CD14-positive monocyte (primary cell): ENCODE measurements at regions of chr19 and their contacts with region 1.

Region 1: GRCh38 chr19:40633207-40633606 is 32.0 kb downstream of the LTBP4 start:
- DNase-seq: no peak
- H3K4me3 ChIP-seq: no peak overlapping the region
- H3K4me3 Mint-ChIP-seq: peak overlapping the region in 1 of 2 donors; percentile 47
- H3K27ac ChIP-seq: no peak overlapping the region
- H3K27ac Mint-ChIP-seq: peak overlapping the region in 1 of 7 donors; percentile 14
- H3K4me1 ChIP-seq: peaks cover 0 to 4% of the 10 kb centered on the region in 2 donors
- H3K4me1 Mint-ChIP-seq: peaks cover 4% of the 10 kb centered on the region
- H3K27me3 ChIP-seq: peaks cover 0 to 5% of the 10 kb centered on the region in 2 donors
- H3K27me3 Mint-ChIP-seq: peaks cover 10 to 22% (median 10%) of the 10 kb centered on the region in 3 donors
- CTCF ChIP-seq: no peak

Region 2: GRCh38 chr19:40542202-40542859 is 90.9 kb before region 1 on chr19:
- intact Hi-C with region 1: loop called (anchors 5 kb)
- DNase-seq: no peak
- H3K4me3 ChIP-seq: no peak overlapping the region
- H3K4me3 Mint-ChIP-seq: peak overlapping the region in 1 of 2 donors; percentile 43
- H3K27ac ChIP-seq: no peak overlapping the region
- H3K27ac Mint-ChIP-seq: peak overlapping the region in 1 of 7 donors; percentile 28
- H3K4me1 ChIP-seq: no peaks in the 10 kb centered on the region
- H3K4me1 Mint-ChIP-seq: no peaks in the 10 kb centered on the region
- H3K27me3 ChIP-seq: no peaks in the 10 kb centered on the region
- H3K27me3 Mint-ChIP-seq: peaks cover 13 to 32% (median 28%) of the 10 kb centered on the region in 3 donors
- CTCF ChIP-seq: no peak

Region 3: DNA sequence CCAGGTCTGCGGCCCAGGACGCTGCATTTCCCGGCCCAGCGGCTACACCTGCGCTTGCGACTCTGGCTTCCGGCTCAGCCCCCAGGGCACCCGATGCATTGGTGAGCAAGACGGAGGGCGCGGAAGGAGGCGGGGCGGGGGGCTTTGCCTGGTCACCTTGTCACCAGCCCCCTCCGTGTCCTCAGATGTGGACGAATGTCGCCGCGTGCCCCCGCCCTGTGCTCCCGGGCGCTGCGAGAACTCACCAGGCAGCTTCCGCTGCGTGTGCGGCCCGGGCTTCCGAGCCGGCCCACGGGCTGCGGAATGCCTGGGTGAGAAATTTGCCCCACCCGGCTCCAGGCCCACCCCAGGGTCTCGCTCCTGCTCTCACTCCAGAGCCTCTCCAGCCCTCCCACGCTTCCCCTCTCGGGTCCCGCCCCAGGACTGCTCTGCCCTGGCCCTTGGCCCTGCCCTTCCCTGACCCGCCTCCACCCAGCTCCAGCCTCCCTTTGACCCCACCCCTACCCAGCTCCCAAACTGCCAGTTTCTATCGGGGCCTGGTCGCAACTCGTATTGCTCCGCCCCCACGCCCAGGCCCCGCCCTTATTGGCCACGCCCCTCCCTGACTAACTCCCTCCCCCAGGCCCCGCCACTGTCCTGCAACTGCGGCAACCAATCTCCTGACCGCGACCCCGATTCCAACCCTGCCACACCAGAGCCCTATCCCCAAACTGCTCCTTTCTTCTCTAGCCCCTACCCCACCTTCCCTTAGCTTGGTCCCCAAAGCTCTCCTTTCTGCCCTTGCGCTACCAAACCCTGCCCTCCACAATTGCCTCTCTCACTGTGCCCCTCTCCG is 23.4 kb before region 1 on chr19:
- intact Hi-C with region 1: no loop called
- DNase-seq: peak; percentile 76 to 88 (median 87)
- H3K4me3 ChIP-seq: peak overlapping the region; percentile 35 to 74 (median 37)
- H3K4me3 Mint-ChIP-seq: peak overlapping the region; percentile 73 to 86
- H3K27ac ChIP-seq: peak overlapping the region in 1 of 2 donors; percentile 60
- H3K27ac Mint-ChIP-seq: peak overlapping the region in 6 of 7 donors; percentile 46 to 87 (median 73)
- H3K4me1 ChIP-seq: peaks cover 55 to 65% of the 10 kb centered on the region in 2 donors
- H3K4me1 Mint-ChIP-seq: peaks cover 67% of the 10 kb centered on the region
- H3K27me3 ChIP-seq: peaks cover 2 to 46% of the 10 kb centered on the region in 2 donors
- H3K27me3 Mint-ChIP-seq: peaks cover 46 to 69% (median 58%) of the 10 kb centered on the region in 3 donors
- CTCF ChIP-seq: no peak